Left ventricle myocardium superior (tissue), 1 donor: ENCODE measurements at regions of chr12 and their contacts with region 1.

Region 1: DNA sequence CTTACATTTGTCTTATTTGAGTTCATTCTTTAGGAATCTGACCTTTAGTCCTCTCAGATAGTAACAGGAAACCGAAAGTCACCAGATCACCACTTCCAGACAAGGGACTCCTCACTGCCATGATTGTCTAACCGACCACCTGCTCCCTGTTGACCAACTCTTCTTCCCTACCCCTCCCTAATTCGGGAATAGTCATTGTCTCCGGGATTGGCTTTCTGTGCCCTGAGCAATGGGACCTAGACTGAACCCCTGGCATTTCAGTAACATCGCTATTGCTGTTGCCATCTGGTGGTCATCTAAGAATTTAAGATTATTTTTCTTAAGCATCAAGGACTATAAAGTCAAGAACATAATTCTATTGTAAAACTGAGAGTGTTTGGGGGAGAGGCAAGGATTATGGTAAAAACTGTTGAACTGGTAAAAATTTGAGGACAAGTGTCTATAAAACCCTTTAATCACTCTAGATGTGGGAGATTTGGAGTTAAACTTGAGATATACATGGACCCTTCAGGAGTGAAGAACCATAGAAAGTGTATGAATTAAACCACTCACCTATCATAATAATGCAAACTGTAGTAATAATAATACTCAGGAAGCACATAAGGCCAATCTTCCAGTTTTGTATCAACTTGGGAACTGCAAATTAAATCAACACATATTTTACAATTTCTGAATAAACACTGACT is 6.3 kb downstream of the CLEC2A start:
- DNase-seq: no peak
- ATAC-seq: peak; percentile 27

Region 2: GRCh38 chr12:9750276-9751203 is 175.3 kb before region 1 on chr12:
- intact Hi-C with region 1: loop called (anchors 2 kb)
- DNase-seq: peak; percentile 30
- ATAC-seq: peak; percentile 88

Region 3: DNA sequence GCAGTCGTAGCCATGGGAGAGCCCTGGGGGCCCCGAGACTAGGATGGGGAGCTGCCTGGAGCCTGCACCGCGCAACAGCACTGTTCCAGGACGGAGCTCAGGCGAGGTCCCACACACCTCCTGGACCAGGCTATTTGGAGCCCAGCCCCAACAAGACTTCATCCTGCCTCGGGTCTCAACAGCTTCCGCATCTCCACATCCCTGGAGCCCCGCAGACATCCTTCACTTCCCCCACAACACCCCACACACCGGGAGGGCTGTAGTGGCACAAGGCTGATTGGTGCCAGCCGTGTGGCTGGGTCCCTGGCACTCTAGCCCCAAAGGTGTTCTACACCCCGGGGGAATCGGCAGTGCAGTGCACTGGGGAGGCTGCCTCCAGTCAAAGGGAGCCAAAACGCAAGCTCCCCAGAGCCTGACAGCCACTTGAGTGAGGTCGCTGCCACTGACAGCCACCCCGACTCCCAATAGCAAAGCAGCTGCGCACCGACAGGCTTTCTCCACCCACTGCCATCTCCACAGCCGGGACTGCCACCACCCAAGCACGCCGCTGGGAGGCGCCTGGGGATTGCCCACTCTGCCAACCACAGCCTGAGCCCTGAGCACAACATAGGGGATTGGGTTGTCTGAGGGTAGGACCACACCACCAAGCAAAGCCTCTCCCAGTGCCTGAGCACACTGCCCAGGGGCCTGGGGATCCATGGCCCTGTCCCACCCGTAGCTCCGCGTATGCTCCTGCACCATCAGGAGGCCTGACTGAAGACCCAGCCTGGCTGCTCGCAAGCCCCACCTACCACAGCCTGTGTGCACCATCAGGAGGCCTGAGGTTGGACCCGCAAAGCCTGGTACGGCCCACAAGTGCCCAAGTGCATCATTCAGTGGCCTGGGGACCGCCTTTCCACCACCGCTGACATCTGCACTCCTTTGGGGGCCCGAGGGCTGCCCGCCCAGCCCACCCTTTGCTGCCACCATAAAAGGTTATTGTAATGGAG is 111.7 kb before region 1 on chr12:
- intact Hi-C with region 1: loop called (anchors 10 kb)
- DNase-seq: peak; percentile 85
- ATAC-seq: peak; percentile 92